Esophagus muscularis mucosa (tissue), 4 donors: ENCODE measurements at regions of chr7 and their contacts with region 1.

Region 1: DNA sequence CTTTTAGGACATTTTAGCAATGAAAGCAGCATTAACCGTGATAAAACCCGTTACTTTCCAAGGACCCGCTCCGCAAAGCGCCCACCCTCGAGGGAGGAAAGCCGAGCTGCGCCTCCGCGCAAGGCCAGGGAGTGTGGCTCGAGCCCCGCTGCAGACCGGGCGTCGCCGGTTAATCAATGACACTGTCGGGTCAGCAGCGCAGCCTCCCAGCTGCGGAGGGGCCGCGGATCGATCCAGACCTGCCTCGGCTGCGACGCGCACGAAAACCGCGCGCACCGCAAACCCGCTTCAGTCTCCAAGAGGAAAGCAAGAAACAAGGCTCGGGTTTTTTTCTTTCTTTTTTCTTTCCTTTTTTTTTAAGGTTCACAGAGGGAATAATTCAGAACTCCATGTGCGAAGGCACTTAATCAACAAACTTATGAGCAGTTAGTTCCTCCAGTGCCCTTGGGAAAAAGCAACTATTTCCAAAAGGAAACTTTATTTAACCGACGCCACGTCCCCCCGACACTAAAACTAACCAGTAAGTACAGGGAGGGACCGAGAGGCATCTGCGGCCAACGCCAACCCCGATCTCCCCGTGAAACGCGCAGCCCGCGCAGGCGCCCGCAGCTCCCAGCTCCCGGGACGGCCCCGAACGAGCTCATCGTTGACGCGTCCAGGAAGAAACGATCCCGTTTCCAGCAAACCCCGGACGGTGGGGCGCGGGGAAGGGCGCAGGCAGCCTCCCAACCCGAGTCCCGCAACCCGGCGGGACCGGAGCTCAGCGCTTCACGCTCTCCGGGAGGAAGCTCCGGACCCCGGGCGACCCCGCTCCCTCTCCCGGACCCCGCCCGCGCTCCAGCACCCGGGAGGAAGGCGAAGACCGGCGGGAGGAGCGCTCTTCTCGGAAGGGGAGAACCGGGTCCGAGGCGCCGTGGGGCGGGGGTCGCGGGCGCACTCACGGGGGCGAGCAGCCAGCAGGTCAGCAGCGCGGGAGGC is 598 bp downstream of the VIPR2 start:
- DNase-seq: peak; percentile 90
- H3K4me3 ChIP-seq: peak overlapping the region; percentile 62 to 87 (median 66)
- H3K27ac ChIP-seq: peak overlapping the region; percentile 58 to 79 (median 70)
- H3K4me1 ChIP-seq: peaks cover 22 to 45% (median 28%) of the 10 kb centered on the region in 4 donors
- H3K27me3 ChIP-seq: peaks cover 0 to 50% (median 10%) of the 10 kb centered on the region in 4 donors
- CTCF ChIP-seq: no peak
- EP300 ChIP-seq: no peak
- POLR2A ChIP-seq: no peak

Region 2: DNA sequence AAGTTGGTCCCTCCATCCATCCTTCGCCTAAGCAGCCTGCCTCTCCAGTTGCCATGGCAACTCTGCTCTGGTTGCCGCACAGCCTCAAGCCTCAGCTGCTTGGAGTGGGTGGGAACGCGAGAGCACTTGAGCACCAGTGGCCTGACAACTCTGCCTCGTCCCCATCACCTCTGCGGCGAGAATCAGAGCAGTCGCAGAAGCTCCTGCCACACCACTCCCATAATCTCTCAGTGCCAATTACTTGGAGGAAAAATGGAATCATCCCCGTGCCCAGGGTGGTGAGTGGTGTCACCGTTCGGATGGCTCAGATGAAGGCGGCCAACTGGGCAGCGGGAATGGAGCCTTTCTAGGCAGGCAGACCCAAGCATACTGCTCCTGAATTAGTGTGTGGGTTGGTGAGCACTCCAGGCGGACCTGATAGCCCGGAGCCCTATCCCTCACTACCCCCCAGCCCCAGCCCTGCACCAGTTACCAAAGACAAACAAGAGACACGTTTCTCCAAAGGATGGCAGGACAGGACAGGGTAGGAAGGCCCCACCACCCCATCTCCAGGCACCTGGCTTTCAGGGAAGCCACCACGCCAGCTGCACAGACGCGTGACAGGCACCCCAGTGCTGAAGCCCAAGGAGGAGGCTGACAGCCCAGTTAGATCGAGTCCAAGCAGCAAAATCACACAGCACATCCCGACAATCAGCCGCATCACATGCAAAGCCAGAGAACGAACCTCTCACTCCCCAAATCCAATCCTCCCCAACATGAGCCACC is 891.8 kb before region 1 on chr7:
- intact Hi-C with region 1: no loop called
- DNase-seq: no peak
- H3K4me3 ChIP-seq: no peak overlapping the region
- H3K27ac ChIP-seq: no peak overlapping the region
- H3K4me1 ChIP-seq: no peaks in the 10 kb centered on the region
- H3K27me3 ChIP-seq: peaks cover 0 to 5% (median 0%) of the 10 kb centered on the region in 4 donors
- CTCF ChIP-seq: no peak
- EP300 ChIP-seq: no peak
- POLR2A ChIP-seq: no peak

Region 3: GRCh38 chr7:159030490-159031134 is 113.5 kb before region 1 on chr7:
- intact Hi-C with region 1: loop called (anchors 10 kb)
- DNase-seq: peak; percentile 93
- H3K4me3 ChIP-seq: peak overlapping the region; percentile 59 to 70 (median 60)
- H3K27ac ChIP-seq: peak overlapping the region; percentile 69 to 82 (median 70)
- H3K4me1 ChIP-seq: peaks cover 7 to 36% (median 25%) of the 10 kb centered on the region in 4 donors
- H3K27me3 ChIP-seq: peaks cover 0 to 21% (median 2%) of the 10 kb centered on the region in 4 donors
- CTCF ChIP-seq: peak; percentile 32 to 64 (median 43)
- EP300 ChIP-seq: no peak
- POLR2A ChIP-seq: no peak